ENCODE measurements at regions of chr6 and their contacts with region 1.

Region 1: GRCh38 chr6:24752917-24753490 is 21.7 kb upstream of the GMNN start:
- DNase-seq: peak; percentile 31
- H3K4me3 Mint-ChIP-seq: no peak overlapping the region
- H3K27ac Mint-ChIP-seq: peak overlapping the region; percentile 0
- H3K4me1 Mint-ChIP-seq: peaks cover 20% of the 10 kb centered on the region
- H3K27me3 Mint-ChIP-seq: no peaks in the 10 kb centered on the region
- CTCF ChIP-seq: no peak

Region 2: DNA sequence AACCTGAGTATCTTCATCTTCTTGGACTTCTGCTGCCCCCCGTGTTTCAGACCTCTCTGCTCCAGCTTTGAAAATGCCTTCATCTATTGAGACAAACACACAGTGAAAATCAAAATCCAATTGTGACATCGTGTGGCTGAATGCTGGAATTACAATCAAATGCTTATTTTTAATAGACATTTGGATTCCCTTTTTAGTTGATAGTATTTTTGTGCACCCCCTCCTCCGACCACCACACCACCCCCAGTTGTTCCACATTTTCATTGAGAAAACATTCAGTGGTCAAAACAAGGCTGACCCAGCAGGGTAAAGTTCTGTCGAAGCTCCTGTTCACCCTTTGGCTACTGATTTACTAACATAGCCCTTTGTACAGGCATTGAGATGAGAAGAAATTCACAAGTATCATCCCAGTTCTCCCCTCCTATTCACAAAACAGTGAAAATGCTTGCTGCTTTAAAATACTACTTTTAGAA is 547.9 kb before region 1 on chr6:
- CTCF ChIA-PET with region 1: no interaction called
- intact Hi-C with region 1: no loop called
- DNase-seq: peak; percentile 50
- H3K4me3 Mint-ChIP-seq: no peak overlapping the region
- H3K27ac Mint-ChIP-seq: no peak overlapping the region
- H3K4me1 Mint-ChIP-seq: peaks cover 31% of the 10 kb centered on the region
- H3K27me3 Mint-ChIP-seq: no peaks in the 10 kb centered on the region
- CTCF ChIP-seq: peak; percentile 79

Region 3: GRCh38 chr6:24788048-24788665 is 35.2 kb after region 1 on chr6:
- CTCF ChIA-PET with region 1: no interaction called
- intact Hi-C with region 1: no loop called
- DNase-seq: no peak
- H3K4me3 Mint-ChIP-seq: no peak overlapping the region
- H3K27ac Mint-ChIP-seq: no peak overlapping the region
- H3K4me1 Mint-ChIP-seq: peaks cover 1% of the 10 kb centered on the region
- H3K27me3 Mint-ChIP-seq: no peaks in the 10 kb centered on the region
- CTCF ChIP-seq: no peak

Region 4: GRCh38 chr6:25006565-25007001 is 253.6 kb after region 1 on chr6:
- CTCF ChIA-PET with region 1: interaction called, 10 read pairs
- intact Hi-C with region 1: no loop called
- DNase-seq: peak; percentile 58
- H3K4me3 Mint-ChIP-seq: no peak overlapping the region
- H3K27ac Mint-ChIP-seq: peak overlapping the region; percentile 9
- H3K4me1 Mint-ChIP-seq: peaks cover 59% of the 10 kb centered on the region
- H3K27me3 Mint-ChIP-seq: no peaks in the 10 kb centered on the region
- CTCF ChIP-seq: no peak

Measured in Calu3 (cell line).